ENCODE measurements at regions of chr9 and their contacts with region 1.

Region 1: DNA sequence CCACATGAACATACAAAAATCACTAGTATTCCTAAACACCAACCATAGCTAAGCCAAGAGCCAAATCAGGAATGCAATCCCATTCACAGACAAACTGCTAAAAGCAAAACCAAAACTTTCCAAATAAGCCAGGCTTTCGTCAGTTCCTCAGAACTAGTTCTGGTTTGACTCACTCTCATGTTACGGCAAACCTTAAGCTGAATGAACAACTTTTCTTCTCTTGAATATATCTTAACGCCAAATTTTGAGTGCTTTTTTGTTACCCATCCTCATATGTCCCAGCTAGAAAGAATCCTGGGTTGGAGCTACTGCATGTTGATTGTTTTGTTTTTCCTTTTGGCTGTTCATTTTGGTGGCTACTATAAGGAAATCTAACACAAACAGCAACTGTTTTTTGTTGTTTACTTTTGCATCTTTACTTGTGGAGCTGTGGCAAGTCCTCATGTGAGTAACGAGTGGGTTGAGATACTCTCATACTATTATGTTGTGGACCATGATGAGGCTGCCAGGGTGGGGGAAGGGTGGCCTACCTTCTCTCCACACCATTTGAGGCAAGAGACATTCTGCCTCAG is at the start of gene PDCD1LG2:
- DNase-seq: peak; percentile 76
- ATAC-seq: peak; percentile 71
- H3K4me3 ChIP-seq: peak within 1 kb of the TSS; percentile 49
- H3K27ac ChIP-seq: peak within 1 kb of the TSS; percentile 82
- H3K4me1 ChIP-seq: peaks cover 39% of the 10 kb centered on the region
- H3K27me3 ChIP-seq: no peaks in the 10 kb centered on the region
- CTCF ChIP-seq: no peak
- EP300 ChIP-seq: peak in 1 of 2 experiments; percentile 89; a peak in 2 of 4 replicates
- POLR2A ChIP-seq: no peak
- RAD21 ChIP-seq: no peak
- polyA plus RNA-seq, gene PDCD1LG2: 1.5 to 2.5 TPM

Region 2: DNA sequence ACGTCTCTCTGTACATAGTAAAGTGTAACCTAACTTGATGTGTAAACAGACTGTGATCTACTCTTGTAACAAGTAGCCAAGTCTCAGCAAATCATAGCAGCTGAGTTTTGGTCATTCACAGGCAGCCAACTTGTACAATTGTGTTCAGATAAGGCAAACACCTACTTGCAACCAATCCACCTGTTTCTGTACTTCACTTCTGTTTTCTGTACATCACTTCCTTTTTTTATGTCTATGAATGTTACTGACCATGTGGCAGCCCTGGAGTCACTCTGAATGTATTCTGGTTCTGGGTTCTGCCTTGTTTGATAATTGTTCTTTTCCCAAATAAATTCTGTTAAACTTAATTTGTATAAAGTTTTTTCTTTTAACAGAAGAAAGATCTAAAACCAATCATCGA is 232.0 kb before region 1 on chr9:
- CTCF ChIA-PET with region 1: no interaction called
- POLR2A ChIA-PET with region 1: no interaction called
- RAD21 ChIA-PET with region 1: no interaction called
- SMC1A ChIA-PET with region 1: no interaction called
- in situ Hi-C with region 1: no loop called
- intact Hi-C with region 1: no loop called
- DNase-seq: peak; percentile 13
- ATAC-seq: peak; percentile 83
- H3K4me3 ChIP-seq: no peak overlapping the region
- H3K27ac ChIP-seq: no peak overlapping the region
- H3K4me1 ChIP-seq: peaks cover 2% of the 10 kb centered on the region; the same call in 1 of the 2 replicates
- H3K27me3 ChIP-seq: no peaks in the 10 kb centered on the region
- CTCF ChIP-seq: no peak
- EP300 ChIP-seq: no peak
- POLR2A ChIP-seq: no peak
- RAD21 ChIP-seq: no peak

Region 3: DNA sequence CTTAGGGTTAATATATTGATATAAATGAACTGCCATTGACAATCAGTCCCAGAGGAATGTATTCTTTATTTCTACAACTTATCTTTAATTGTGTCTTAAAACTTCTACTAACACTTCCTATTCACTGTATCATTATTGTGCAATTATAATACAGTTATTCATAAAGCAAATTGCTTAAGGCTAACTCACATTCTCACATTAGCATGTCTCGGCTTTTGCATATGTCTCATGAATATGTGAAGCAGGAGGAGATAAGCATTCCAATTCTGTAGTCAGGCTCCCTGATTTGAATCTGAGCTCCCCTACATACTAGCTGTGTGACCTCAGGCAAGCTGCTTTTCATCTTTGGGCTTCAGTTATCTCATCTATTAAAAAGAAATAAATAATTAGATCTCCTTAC is 118.2 kb before region 1 on chr9:
- CTCF ChIA-PET with region 1: no interaction called
- POLR2A ChIA-PET with region 1: no interaction called
- RAD21 ChIA-PET with region 1: no interaction called
- SMC1A ChIA-PET with region 1: no interaction called
- in situ Hi-C with region 1: no loop called
- intact Hi-C with region 1: no loop called
- DNase-seq: no peak
- ATAC-seq: no peak
- H3K4me3 ChIP-seq: no peak overlapping the region
- H3K27ac ChIP-seq: no peak overlapping the region
- H3K4me1 ChIP-seq: peaks cover 9% of the 10 kb centered on the region; the same call in 1 of the 2 replicates
- H3K27me3 ChIP-seq: no peaks in the 10 kb centered on the region
- CTCF ChIP-seq: no peak
- EP300 ChIP-seq: no peak
- POLR2A ChIP-seq: no peak
- RAD21 ChIP-seq: no peak

Region 4: GRCh38 chr9:5425006-5425628 is 85.3 kb before region 1 on chr9:
- CTCF ChIA-PET with region 1: no interaction called
- POLR2A ChIA-PET with region 1: no interaction called
- RAD21 ChIA-PET with region 1: no interaction called
- SMC1A ChIA-PET with region 1: no interaction called
- in situ Hi-C with region 1: no loop called
- intact Hi-C with region 1: no loop called
- DNase-seq: peak; percentile 30
- ATAC-seq: peak; percentile 77
- H3K4me3 ChIP-seq: no peak overlapping the region
- H3K27ac ChIP-seq: no peak overlapping the region
- H3K4me1 ChIP-seq: no peaks in the 10 kb centered on the region
- H3K27me3 ChIP-seq: no peaks in the 10 kb centered on the region
- CTCF ChIP-seq: peak; percentile 45 to 61 (median 56); a peak in 5 of 6 replicates
- EP300 ChIP-seq: no peak
- POLR2A ChIP-seq: no peak
- RAD21 ChIP-seq: peak; percentile 78

Region 5: DNA sequence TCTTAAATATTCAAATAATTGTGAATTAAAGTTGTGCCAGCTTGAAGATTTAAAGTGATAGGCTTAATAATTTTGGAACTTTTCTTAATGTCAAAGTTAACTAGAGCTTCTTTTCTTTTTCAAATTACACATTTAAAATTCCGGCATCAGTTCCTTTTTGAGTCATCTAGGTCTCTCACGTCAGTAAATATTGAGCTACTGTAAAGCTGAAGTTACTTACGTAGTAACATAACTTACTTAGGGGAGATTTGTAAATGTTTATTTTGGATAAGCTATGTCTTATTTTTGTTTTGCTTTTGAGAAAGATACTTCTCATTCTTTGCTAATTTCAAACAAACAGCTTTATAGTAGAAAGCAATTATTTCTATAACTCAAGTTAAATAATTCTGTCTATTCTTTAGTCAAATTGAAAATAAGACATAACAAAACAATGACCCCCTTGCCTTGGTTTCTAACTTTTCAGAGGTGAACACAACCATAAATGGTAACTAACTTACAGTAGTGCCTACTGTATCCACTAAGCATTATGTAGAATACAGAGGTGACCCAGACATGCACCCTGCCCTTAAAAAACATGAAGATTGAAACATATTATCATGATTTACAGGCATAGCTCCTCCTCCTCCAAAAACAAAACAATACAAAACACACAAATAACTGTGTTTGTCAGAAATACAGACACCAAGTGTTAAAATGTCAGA is 30.3 kb before region 1 on chr9:
- CTCF ChIA-PET with region 1: no interaction called
- POLR2A ChIA-PET with region 1: interaction called, 16 read pairs
- RAD21 ChIA-PET with region 1: interaction called, 35 read pairs
- SMC1A ChIA-PET with region 1: interaction called, 87 read pairs
- in situ Hi-C with region 1: no loop called
- intact Hi-C with region 1: loop called (anchors 1 kb)
- DNase-seq: no peak
- ATAC-seq: peak; percentile 85
- H3K4me3 ChIP-seq: no peak overlapping the region
- H3K27ac ChIP-seq: peak overlapping the region; percentile 62
- H3K4me1 ChIP-seq: peaks cover 27% of the 10 kb centered on the region
- H3K27me3 ChIP-seq: no peaks in the 10 kb centered on the region
- CTCF ChIP-seq: no peak
- EP300 ChIP-seq: peak; percentile 37 to 47; a peak in 2 of 4 replicates
- POLR2A ChIP-seq: no peak
- RAD21 ChIP-seq: no peak

Region 6: GRCh38 chr9:5499889-5500398 is 10.5 kb before region 1 on chr9:
- CTCF ChIA-PET with region 1: interaction called, 15 read pairs
- POLR2A ChIA-PET with region 1: interaction called, 68 read pairs
- RAD21 ChIA-PET with region 1: interaction called, 144 read pairs
- SMC1A ChIA-PET with region 1: interaction called, 99 read pairs
- in situ Hi-C with region 1: no loop called
- intact Hi-C with region 1: no loop called
- DNase-seq: no peak
- ATAC-seq: no peak
- H3K4me3 ChIP-seq: no peak overlapping the region
- H3K27ac ChIP-seq: no peak overlapping the region
- H3K4me1 ChIP-seq: no peaks in the 10 kb centered on the region
- H3K27me3 ChIP-seq: no peaks in the 10 kb centered on the region
- CTCF ChIP-seq: no peak
- EP300 ChIP-seq: no peak
- POLR2A ChIP-seq: no peak
- RAD21 ChIP-seq: no peak

Region 7: DNA sequence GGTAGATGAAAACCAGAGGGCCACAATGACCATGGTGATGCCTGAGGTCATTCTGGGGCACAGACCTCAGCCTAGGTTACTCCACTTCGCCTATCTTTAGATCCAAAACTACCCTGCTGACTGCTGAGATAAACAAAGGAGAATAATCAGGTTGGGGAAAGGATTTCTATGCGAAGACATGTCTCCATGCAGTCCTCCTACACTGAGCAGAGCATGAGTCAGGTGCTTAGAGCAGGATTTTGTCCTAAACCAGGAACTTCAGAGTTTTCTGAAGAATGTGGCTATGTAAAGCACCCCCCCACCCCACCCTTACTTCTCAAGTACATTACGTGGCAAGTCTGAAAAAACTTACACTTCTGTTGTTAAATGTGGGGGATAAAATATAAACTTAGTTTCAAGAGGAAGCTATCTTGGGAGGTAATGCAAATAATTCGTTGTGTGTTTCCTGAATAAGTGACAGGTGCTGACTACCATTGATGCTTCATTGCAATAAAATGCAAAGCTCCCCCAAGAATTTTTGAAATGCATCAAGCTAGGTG is 19.3 kb after region 1 on chr9:
- CTCF ChIA-PET with region 1: interaction called, 11 read pairs
- POLR2A ChIA-PET with region 1: interaction called, 67 read pairs
- RAD21 ChIA-PET with region 1: interaction called, 30 read pairs
- SMC1A ChIA-PET with region 1: interaction called, 87 read pairs
- in situ Hi-C with region 1: no loop called
- intact Hi-C with region 1: no loop called
- DNase-seq: peak; percentile 73
- ATAC-seq: peak; percentile 62
- H3K4me3 ChIP-seq: peak overlapping the region; percentile 47; the same call in 1 of the 2 replicates
- H3K27ac ChIP-seq: peak overlapping the region; percentile 93
- H3K4me1 ChIP-seq: peaks cover 43% of the 10 kb centered on the region
- H3K27me3 ChIP-seq: no peaks in the 10 kb centered on the region
- CTCF ChIP-seq: no peak
- EP300 ChIP-seq: peak; percentile 9 to 59; a peak in 1 of 4 replicates
- POLR2A ChIP-seq: no peak
- RAD21 ChIP-seq: 0 out of 2 replicates have a peak, but pooled peaks have one; percentile 0

Region 8: DNA sequence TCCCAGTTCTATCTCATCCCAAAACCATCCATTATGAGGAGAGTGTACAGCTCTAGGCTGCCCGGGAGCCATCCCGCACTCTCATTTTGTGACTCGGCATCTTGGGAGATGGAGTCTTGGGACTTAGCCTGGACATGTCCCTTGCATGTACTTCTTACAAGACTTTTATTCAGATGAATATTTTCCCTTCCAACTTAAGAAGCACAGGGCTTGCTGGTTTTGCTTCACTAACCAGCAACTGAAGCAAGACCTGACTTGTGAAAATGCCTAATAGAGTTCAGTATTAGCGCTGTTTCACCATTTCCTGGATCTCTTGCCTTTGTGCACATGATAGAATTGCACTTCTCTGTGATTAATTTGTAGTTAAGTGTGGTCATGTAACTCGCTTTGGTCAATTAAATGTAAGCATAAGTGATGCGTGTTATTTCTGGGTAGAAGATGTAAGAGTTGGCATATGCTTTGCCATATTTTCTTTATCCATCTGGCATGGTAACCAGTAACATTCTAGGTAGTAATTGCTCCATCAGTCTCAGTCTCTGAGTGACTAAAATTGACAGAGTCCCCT is 55.7 kb after region 1 on chr9:
- CTCF ChIA-PET with region 1: interaction called, 4 read pairs
- POLR2A ChIA-PET with region 1: interaction called, 10 read pairs
- RAD21 ChIA-PET with region 1: interaction called, 34 read pairs
- SMC1A ChIA-PET with region 1: interaction called, 7 read pairs
- in situ Hi-C with region 1: no loop called
- intact Hi-C with region 1: no loop called
- DNase-seq: peak; percentile 91
- ATAC-seq: peak; percentile 91
- H3K4me3 ChIP-seq: no peak overlapping the region
- H3K27ac ChIP-seq: peak overlapping the region; percentile 80
- H3K4me1 ChIP-seq: peaks cover 39% of the 10 kb centered on the region
- H3K27me3 ChIP-seq: no peaks in the 10 kb centered on the region
- CTCF ChIP-seq: no peak
- EP300 ChIP-seq: 0 out of 4 replicates have a peak, but pooled peaks of 1 of the 2 experiments have one; percentile 49
- POLR2A ChIP-seq: no peak
- RAD21 ChIP-seq: no peak

Region 9: GRCh38 chr9:5760338-5760737 is 249.9 kb after region 1 on chr9:
- CTCF ChIA-PET with region 1: no interaction called
- POLR2A ChIA-PET with region 1: no interaction called
- RAD21 ChIA-PET with region 1: no interaction called
- SMC1A ChIA-PET with region 1: no interaction called
- in situ Hi-C with region 1: no loop called
- intact Hi-C with region 1: no loop called
- DNase-seq: no peak
- ATAC-seq: no peak
- H3K4me3 ChIP-seq: no peak overlapping the region
- H3K27ac ChIP-seq: no peak overlapping the region
- H3K4me1 ChIP-seq: peaks cover 17% of the 10 kb centered on the region
- H3K27me3 ChIP-seq: no peaks in the 10 kb centered on the region
- CTCF ChIP-seq: no peak
- EP300 ChIP-seq: no peak
- POLR2A ChIP-seq: no peak
- RAD21 ChIP-seq: no peak